Activated naive CD4-positive, alpha-beta T cell treated with anti-CD3 and anti-CD28 coated beads, Interleukin-2, amount 10 ng/mL, durations not matched to agents 7 days and 5 days (primary cell): ENCODE measurements at regions of chr14 and their contacts with region 1.

Region 1: DNA sequence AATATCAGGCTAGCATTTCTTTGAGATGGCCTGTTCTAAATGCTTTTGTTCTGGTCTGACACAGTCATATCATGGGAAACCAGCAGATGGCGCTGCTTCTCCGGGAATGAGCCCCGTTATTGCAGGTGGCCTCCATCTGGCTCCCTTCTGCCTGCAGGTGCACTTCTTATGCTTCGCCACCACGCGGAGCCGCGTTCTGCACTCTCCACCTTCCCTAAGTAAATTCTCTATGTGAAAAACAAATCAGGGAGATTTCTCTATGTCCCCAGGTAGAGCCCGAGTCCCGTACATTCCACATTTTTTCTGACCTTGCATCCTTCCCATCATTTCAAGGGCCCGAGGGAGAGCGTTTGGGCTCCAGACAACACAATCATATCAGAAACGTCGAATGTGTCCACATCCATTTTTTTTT is 26.2 kb downstream of the GLRX5 start:
- DNase-seq: peak; percentile 92
- H3K4me3 Mint-ChIP-seq: no peak overlapping the region
- H3K27ac Mint-ChIP-seq: no peak overlapping the region
- H3K4me1 Mint-ChIP-seq: no peaks in the 10 kb centered on the region
- H3K27me3 Mint-ChIP-seq: peaks cover 8% of the 10 kb centered on the region

Region 2: DNA sequence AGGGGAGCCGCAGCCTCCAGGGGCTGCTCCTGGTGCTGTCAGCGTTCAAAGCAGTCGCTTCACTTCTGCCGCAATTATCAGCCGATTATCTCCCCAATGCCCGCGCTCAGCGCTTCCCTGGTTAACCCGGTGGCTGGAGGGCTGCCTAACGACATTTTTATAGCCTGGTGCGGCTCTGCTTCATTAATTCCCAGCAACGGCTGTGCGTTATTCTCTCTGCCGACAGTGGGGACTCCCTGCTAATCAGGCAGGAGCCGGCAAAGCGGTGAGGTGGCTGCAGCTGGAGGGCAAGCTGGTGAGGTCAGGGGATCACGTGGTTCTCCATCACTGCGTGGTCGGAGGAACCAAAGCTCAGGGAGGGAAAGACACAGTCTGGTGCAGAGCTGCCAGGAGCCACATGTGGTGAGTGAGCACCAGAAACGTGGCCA is 36.8 kb after region 1 on chr14:
- CTCF ChIA-PET with region 1: no interaction called
- DNase-seq: no peak
- H3K4me3 Mint-ChIP-seq: no peak overlapping the region
- H3K27ac Mint-ChIP-seq: no peak overlapping the region
- H3K4me1 Mint-ChIP-seq: no peaks in the 10 kb centered on the region
- H3K27me3 Mint-ChIP-seq: peaks cover 24% of the 10 kb centered on the region

Region 3: DNA sequence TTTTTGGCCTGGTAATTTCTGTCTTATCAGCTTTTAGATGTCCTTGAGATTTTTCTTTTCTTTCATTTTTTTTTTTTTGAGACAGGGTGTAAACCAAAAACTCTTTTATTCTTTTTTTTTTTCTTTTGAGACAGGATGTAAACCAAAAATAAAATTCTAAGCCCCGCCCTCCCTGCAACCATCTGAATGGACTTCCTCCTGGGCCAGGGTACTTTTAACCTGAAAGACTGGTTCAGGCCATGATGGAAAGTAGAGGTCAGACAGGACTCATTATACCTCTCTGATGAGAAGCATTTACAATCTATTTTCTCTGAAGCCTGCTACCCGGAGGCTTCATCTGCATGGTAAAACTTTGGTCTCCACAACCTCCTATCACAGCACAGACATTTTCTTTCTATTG is 91.7 kb after region 1 on chr14:
- CTCF ChIA-PET with region 1: no interaction called
- DNase-seq: no peak
- H3K4me3 Mint-ChIP-seq: no peak overlapping the region
- H3K27ac Mint-ChIP-seq: no peak overlapping the region
- H3K4me1 Mint-ChIP-seq: peaks cover 8% of the 10 kb centered on the region
- H3K27me3 Mint-ChIP-seq: peaks cover 9% of the 10 kb centered on the region

Region 4: DNA sequence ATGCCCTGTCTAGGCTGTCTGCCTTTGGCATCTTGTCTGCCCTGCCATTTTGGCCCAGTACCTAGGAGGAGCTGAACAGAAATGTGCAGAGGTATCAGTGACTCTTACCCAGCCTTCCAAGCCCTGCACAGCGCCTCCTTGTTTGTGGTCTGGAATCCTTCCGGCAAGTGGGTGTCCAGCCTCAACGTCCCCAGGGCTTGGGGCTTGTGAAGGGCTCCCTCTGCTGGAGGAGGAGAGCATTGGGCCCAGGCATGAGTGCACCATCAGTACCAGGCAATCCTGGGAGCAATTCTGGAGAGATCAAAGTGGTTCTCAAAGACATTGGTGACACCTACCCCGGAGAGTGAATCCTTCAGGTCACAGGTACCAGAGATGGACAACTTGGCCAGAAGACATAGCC is 122.8 kb after region 1 on chr14:
- CTCF ChIA-PET with region 1: interaction called, 30 read pairs
- DNase-seq: peak; percentile 47
- H3K4me3 Mint-ChIP-seq: no peak overlapping the region
- H3K27ac Mint-ChIP-seq: no peak overlapping the region
- H3K4me1 Mint-ChIP-seq: no peaks in the 10 kb centered on the region
- H3K27me3 Mint-ChIP-seq: peaks cover 21% of the 10 kb centered on the region

Region 5: GRCh38 chr14:95993768-95994592 is 433.0 kb after region 1 on chr14:
- CTCF ChIA-PET with region 1: interaction called, 12 read pairs
- DNase-seq: peak; percentile 35
- H3K4me3 Mint-ChIP-seq: no peak overlapping the region
- H3K27ac Mint-ChIP-seq: no peak overlapping the region
- H3K4me1 Mint-ChIP-seq: no peaks in the 10 kb centered on the region
- H3K27me3 Mint-ChIP-seq: peaks cover 26% of the 10 kb centered on the region